ENCODE measurements at regions of chr11 and their contacts with region 1.

Region 1: DNA sequence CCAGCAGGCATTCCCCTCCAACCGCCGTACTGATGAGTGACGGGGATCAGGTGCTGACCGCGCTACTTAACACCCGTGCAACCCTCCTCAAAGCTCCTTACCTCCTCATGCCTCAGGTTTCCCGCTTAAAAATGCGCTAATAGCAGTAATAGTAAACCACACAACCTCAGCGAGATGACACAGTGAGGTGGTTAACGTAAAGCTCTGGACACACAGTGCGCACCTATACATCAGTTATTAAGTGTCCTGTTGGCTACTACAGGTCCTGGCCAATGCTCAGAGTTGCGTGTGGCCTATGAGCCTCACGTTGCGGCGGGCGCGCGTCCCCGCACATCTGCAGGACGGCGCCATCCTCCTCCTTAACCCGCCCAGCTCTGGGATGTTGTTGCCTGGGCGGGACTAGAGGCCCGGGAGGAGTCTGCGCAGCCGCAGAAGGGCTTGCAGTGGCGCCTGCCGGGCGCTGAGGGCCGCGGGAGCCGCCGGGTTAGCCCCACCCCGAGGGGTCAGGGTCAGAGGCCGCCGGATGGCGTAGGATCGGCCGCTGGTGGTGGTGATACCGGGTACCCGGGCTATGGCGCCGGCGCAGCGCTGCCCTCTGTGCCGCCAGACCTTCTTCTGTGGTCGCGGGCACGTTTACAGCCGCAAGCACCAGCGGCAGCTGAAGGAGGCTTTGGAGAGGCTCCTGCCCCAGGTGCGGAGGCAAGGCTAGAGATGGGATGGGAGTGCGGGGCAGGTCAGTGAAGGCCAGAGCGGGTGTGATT is at the start of gene CENATAC:
- DNase-seq: peak; percentile 99
- total RNA-seq, gene CENATAC: 27.8 TPM

Region 2: DNA sequence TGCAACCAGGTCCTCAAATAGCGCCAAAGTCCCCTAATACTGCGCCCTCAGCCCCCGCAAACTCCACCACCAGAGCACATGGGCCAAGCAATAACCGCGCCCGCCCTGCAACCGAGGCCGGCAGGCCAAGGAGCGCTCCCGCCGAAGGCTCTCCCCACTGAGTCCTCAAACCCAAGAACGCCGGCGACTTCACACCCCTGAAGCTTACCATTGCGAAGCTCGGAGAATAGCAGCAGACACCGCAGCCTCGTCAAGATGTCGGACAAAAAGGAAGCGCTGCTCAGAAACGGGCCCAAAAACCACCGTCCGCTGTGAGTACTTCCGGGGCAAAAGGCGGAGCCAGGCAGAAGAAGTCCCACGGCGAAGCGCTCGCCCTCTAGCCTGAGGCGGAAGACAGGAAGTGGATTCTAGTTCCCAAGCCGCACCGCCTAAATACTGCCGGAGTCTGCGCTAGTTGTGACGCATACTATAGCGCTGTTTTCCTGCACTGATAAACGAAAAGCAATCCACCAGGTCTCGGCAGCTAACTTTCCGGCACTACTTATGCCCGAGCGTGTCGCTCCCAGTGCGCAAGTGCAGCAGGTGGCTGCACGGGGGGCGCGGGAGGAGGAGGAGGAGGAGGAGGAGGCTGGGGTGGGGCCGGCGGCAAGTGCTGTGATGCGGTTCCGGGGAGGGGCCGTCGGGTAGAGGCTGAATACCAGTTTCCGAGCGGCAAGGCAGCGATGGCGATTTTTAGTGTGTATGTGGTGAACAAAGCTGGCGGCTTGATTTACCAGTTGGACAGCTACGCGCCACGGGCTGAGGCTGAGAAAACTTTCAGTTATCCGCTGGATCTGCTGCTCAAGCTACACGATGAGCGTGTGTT is 20.5 kb after region 1 on chr11 and contains the starts of genes RPS25 and TRAPPC4:
- intact Hi-C with region 1: loop called in 1 of 2 experiments (anchors 1 kb)
- DNase-seq: peak; percentile 98
- total RNA-seq, gene RPS25: 741 to 816 TPM
- total RNA-seq, gene TRAPPC4: 45.4 to 49.9 TPM